Colonic mucosa (tissue), 4 donors: ENCODE measurements at regions of chr1 and their contacts with region 1.

Region 1: DNA sequence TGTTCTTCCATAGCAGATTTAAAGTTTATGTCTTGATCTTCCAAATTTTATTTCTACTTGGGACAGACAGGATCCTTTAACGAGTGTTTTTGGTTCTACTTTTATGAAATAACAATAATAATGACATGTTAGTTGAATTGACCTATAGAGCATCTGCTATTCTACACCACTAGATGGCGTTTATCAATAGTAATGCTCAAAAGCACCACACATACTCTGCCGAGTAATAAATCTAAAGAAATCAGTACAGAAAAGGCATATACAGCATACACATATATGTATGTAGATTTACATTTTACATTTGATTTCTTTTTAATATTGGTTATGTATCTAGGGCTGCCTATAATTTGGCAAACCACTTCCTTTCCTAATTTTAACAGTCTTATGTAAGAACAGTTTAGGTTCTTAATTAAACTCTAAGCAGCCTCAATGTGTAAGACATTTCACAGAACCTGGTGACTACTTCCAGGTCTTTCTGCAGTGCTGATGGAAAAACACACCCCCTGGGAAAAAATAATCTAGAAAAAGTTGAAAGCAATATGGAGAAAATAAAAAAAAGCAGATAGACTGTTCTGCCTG is 5.9 kb upstream of the SIPA1L2 start:
- DNase-seq: no peak
- H3K4me3 ChIP-seq: no peak overlapping the region
- H3K27ac ChIP-seq: no peak overlapping the region
- H3K4me1 ChIP-seq: no peaks in the 10 kb centered on the region
- H3K27me3 ChIP-seq: no peaks in the 10 kb centered on the region
- CTCF ChIP-seq: peak; percentile 80

Region 2: DNA sequence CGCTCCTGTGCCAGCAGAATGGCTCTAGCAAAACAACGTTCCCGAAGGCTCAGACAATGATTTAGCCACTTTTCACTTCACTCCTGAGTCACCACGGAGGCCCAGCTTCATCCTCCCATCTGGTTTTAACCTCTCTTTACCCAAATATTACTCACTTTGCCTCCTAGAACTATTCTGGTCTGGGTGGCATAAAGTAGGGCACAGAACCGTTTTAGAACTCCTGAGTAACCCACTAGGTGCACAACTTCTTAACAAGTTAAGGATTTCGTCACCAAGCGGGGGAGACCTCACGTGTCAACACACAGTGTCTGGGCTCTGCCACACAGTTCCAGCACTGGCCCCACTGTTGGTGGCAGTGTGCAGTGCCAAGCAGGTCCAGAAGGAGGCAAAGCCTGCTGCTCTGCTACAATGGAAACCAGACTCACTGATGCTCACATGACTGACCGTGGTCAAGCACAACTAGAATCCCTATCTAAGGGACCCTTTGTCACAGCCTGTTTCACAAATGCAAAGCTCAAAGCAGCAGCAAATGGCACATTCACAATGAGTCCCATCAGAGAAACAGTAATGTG is 127.7 kb before region 1 on chr1:
- intact Hi-C with region 1: no loop called
- DNase-seq: no peak
- H3K4me3 ChIP-seq: no peak overlapping the region
- H3K27ac ChIP-seq: no peak overlapping the region
- H3K4me1 ChIP-seq: no peaks in the 10 kb centered on the region
- H3K27me3 ChIP-seq: no peaks in the 10 kb centered on the region
- CTCF ChIP-seq: no peak

Region 3: GRCh38 chr1:232795497-232796053 is 159.7 kb after region 1 on chr1:
- intact Hi-C with region 1: loop called (anchors 5 kb)
- DNase-seq: no peak
- H3K4me3 ChIP-seq: no peak overlapping the region
- H3K27ac ChIP-seq: no peak overlapping the region
- H3K4me1 ChIP-seq: no peaks in the 10 kb centered on the region
- H3K27me3 ChIP-seq: no peaks in the 10 kb centered on the region
- CTCF ChIP-seq: no peak

Region 4: DNA sequence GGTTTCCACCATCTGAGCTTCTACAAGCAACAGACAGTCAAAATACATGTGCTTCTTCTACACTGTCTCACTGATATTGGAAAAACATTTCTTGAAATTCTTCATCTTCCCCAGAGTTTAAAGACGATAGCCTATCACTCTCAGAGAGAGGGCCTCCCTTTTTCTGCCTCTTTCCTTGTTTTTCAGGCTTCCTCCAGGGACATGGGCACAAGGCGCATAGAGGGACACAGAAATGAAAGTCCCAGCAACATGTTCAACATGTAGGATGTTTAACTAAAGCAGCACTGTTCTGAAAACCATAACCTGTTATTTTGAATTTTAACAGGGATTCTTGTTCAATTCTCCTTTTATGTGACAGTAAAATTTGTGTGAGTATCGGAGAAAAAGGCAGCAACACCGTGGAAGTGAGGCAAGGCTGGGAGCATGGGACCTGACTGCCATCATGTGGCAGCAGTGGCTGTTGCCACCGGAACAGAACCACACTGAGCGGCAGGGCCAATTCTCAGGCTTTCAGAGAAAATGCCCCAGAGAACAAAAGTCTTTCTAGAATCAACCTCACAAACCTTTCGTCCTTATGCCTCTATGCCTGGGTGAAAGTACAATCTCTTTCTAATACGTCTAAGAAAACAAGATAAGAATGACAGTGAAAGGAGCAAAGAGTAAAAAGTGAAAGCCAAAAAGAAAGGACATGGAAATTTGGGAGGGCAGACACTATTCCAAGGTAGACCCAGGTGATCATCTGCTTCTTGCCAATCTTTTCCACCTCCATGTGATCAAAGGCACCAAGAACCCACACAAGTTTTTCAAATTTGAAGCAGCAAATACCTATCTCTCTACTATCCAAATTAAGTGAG is 605.2 kb after region 1 on chr1:
- intact Hi-C with region 1: loop called (anchors 5 kb)
- DNase-seq: peak; percentile 76
- H3K4me3 ChIP-seq: no peak overlapping the region
- H3K27ac ChIP-seq: peak overlapping the region; percentile 83
- H3K4me1 ChIP-seq: peaks cover 7% of the 10 kb centered on the region
- H3K27me3 ChIP-seq: no peaks in the 10 kb centered on the region
- CTCF ChIP-seq: peak; percentile 76